ENCODE measurements at regions of chr17 and their contacts with region 1.

Region 1: DNA sequence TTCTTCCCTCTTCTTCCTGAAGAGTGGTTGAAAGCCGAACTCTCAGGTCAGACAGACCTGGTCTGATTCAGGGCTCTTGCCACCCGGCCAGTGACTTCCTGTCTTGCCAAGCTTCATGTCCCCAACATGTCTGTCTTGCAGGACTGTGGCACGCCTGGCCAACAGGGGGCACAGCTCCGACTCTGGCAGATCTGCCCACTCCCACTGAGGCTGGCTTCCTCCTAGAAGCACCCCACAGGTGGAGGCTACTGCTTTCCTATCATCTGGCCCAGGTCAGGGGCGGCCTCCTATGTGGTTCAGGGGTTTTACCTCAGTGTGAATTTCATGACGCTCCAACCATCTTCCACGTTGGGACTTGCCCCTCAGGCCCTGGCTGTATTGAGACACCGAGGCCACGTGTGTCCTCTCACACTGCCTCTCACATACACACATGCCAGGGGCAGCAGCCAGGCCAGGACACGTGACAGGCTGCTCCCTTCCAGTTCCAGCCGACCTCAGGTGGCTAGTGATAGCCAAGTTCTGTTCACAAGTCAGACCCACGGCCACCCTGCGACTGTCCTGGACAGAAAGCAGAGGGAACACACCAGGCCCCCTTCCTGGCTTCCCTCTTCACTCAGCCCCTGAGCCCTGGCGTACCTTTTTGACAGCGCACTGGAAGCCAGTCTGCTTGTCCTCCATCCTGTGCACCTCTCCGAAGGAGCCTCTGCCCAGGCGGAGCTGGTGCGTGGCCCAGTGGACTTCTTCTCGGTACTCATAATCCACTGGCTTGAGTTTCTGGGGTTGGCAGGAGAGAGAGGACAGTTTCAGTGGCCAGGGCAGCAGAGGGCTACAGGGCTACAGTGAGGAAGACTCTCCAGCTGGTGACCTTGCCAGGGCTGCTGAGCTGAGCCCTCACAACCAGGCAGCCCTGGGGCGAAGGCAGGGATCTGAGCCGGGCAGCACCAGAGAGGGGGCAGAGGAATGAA is 22.6 kb upstream of the SPATA32 start:
- DNase-seq: no peak
- ATAC-seq: peak; percentile 75
- H3K4me3 Mint-ChIP-seq: no peak overlapping the region
- H3K27ac Mint-ChIP-seq: peak overlapping the region; percentile 19
- H3K4me1 Mint-ChIP-seq: peaks cover 4% of the 10 kb centered on the region
- H3K27me3 Mint-ChIP-seq: no peaks in the 10 kb centered on the region
- CTCF ChIP-seq: no peak

Region 2: GRCh38 chr17:45098869-45099616 is 185.4 kb before region 1 on chr17:
- CTCF ChIA-PET with region 1: no interaction called
- POLR2A ChIA-PET with region 1: no interaction called
- intact Hi-C with region 1: no loop called
- DNase-seq: peak; percentile 67
- ATAC-seq: peak; percentile 90
- H3K4me3 Mint-ChIP-seq: no peak overlapping the region
- H3K27ac Mint-ChIP-seq: no peak overlapping the region
- H3K4me1 Mint-ChIP-seq: peaks cover 8% of the 10 kb centered on the region
- H3K27me3 Mint-ChIP-seq: no peaks in the 10 kb centered on the region
- CTCF ChIP-seq: no peak

Region 3: DNA sequence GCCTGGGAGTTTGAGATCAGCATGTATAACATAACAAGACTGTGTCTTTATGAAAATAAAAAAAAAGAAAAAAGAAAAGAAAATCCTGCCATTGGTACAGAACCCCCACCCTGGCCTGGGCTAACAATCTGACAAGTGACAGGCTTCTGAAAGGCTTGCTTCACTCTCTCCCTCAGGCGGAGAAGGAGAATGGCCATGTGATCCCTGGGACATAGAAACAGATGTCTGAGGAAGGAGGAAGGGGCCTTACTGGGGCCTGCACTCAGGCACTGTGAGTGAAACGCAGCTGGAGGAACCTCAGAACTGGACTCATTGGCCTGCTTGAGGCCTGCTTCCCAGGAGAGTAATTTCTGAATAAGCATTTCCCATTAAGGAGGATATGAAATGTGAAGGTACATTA is 14.9 kb after region 1 on chr17:
- CTCF ChIA-PET with region 1: interaction called, 8 read pairs
- POLR2A ChIA-PET with region 1: interaction called, 11 read pairs
- intact Hi-C with region 1: no loop called
- DNase-seq: no peak
- ATAC-seq: no peak
- H3K4me3 Mint-ChIP-seq: peak overlapping the region; percentile 42
- H3K27ac Mint-ChIP-seq: peak overlapping the region; percentile 81
- H3K4me1 Mint-ChIP-seq: peaks cover 99% of the 10 kb centered on the region
- H3K27me3 Mint-ChIP-seq: no peaks in the 10 kb centered on the region
- CTCF ChIP-seq: no peak

Region 4: DNA sequence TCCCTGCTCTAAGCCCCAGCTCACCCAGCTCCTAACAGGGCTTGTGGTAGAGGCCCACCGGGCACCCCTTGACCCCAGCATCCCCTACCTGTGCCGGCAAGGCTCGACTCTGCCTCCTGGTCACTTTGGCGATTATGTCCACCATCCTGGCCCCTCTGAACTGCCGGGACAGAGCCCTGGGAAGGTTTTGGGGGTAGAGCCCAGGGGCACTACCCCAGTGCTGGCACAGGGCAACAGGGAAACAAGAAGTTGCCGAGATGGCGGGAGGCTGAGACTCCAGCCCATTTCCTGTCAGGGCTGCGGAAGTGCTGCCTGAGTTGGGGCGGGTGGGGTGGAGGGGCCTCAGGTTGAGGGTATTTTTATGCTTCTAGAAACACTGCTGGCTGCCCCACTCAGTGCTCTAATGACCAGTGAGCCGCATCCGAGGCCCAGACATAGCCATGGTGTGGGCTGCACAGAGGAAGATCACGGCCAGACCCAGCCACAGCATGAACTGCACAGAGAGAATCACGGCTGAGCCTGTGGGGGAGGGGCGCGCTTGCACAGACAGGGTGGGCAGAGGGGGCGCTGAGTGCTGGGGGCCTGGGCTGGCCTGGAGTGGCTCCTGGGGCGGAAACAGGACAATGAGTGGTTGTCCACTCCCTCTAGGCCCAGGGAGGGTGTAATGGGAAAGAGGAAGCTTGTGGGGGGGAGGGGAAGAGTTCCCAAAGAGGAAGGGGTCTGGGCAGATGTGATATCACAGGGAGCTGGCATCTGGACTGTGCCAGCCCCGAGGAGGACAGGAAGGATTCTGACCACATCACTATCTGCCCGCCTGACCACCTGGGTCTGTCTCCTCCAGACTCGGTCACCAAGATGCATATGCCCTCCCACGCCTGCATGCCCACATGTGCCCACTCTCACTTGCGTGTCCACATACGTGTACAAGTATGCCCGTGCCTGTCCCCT is 126.0 kb after region 1 on chr17:
- CTCF ChIA-PET with region 1: no interaction called
- POLR2A ChIA-PET with region 1: interaction called, 12 read pairs
- intact Hi-C with region 1: no loop called
- DNase-seq: peak; percentile 62
- ATAC-seq: peak; percentile 63
- H3K4me3 Mint-ChIP-seq: peak overlapping the region; percentile 99
- H3K27ac Mint-ChIP-seq: peak overlapping the region; percentile 99
- H3K4me1 Mint-ChIP-seq: peaks cover 86% of the 10 kb centered on the region
- H3K27me3 Mint-ChIP-seq: no peaks in the 10 kb centered on the region
- CTCF ChIP-seq: no peak

Measured in activated B cell treated with CpG ODN at 0.5 μM for 24 hours (primary cell).